ENCODE measurements at regions of chr4 and their contacts with region 1.

Region 1: DNA sequence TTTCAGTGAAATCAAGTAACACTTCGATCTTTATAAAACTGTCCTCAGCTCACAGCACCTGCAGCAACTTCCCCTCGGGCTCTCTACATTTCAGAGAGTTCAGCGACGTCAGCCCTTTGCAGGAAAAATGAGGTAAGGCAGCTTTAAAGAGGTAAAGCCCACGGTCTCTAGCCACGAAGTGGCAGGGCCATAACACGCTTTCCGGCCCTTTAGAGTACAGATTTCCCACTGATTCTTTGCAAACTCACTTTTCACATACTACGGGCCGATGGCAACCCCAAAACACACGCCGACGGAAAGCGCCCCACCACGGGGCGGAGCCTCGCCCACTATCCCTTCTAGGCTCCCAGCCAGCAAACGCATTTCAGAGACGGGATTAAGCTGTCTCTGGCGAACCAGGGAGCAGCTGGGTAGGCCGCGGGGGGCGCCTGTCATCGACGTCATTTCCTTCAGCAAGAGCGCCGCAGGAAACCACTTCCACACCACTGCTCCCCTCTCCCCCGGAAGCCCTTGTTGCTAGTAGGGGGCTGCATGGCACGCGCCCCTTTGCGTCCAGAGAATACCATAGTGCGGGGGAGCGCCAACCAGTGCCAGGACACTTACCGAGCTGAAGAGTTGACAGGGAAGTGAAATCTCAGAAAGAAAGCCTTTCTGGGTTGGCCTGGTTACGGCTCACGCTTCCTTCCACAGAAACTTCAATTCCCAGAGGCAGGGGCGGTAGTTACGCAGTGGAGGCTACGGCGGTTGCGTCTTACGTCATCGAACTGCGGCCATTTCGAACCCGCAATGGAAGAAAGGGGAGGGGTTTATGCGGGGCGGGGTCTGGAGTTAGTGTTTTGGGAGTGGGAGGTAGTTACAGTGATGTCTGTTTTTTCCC is at the start of gene TRMT10A:
- DNase-seq: peak; percentile 99
- ATAC-seq: peak; percentile 97
- H3K4me3 ChIP-seq: peak within 1 kb of the TSS; percentile 68
- H3K27ac ChIP-seq: peak within 1 kb of the TSS; percentile 98
- H3K4me1 ChIP-seq: peaks cover 5% of the 10 kb centered on the region
- H3K27me3 ChIP-seq: no peaks in the 10 kb centered on the region
- CTCF ChIP-seq: no peak
- total RNA-seq, gene TRMT10A: 5.0 TPM

Region 2: GRCh38 chr4:99808260-99808857 is 244.8 kb after region 1 on chr4:
- intact Hi-C with region 1: loop called (anchors 10 kb)
- DNase-seq: peak; percentile 78
- ATAC-seq: peak; percentile 93
- H3K4me3 ChIP-seq: no peak overlapping the region
- H3K27ac ChIP-seq: no peak overlapping the region
- H3K4me1 ChIP-seq: no peaks in the 10 kb centered on the region
- H3K27me3 ChIP-seq: no peaks in the 10 kb centered on the region
- CTCF ChIP-seq: peak; percentile 75

Region 3: DNA sequence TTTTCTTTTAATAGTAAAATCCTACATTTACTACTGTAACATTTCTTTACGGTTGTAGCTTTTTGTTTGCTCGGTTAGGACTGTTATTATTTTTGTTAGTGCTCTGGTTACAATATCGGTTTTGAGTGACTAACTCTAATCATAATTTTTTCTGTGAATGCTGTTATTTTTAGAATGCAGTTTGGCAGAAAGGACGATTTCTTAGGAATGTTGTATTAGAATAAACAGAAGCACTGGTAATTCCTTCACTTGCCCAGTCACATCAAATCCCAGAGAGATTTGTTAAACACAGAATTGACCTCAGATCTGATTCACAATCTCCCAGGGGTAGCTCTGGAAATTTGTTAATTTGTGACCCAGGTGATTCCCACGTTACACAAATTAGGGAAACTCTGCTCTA is 605.0 kb after region 1 on chr4:
- intact Hi-C with region 1: no loop called
- DNase-seq: no peak
- ATAC-seq: no peak
- H3K4me3 ChIP-seq: no peak overlapping the region
- H3K27ac ChIP-seq: no peak overlapping the region
- H3K4me1 ChIP-seq: no peaks in the 10 kb centered on the region
- H3K27me3 ChIP-seq: no peaks in the 10 kb centered on the region
- CTCF ChIP-seq: no peak

Measured in upper lobe of right lung (tissue), 1 donor.